Right ventricle myocardium superior (tissue), 1 donor: ENCODE measurements at regions of chr2 and their contacts with region 1.

Region 1: GRCh38 chr2:102703748-102704147 is 58.1 kb upstream of the TMEM182 start:
- DNase-seq: no peak
- ATAC-seq: peak; percentile 83

Region 2: GRCh38 chr2:102473020-102473419 is 230.7 kb before region 1 on chr2 and contains the start of gene SLC9A4:
- intact Hi-C with region 1: loop called (anchors 5 kb)
- DNase-seq: no peak
- ATAC-seq: no peak
- total RNA-seq, gene SLC9A4: not detected